Mammary epithelial cell (primary cell): ENCODE measurements at regions of chr2 and their contacts with region 1.

Region 1: GRCh38 chr2:24971536-24972314 is at the start of gene DNAJC27:
- DNase-seq: peak; percentile 98
- H3K4me3 ChIP-seq: peak within 1 kb of the TSS; percentile 69 to 90 (median 83)
- H3K27ac ChIP-seq: peak within 1 kb of the TSS; percentile 98
- H3K4me1 ChIP-seq: peaks cover 4% of the 10 kb centered on the region
- H3K27me3 ChIP-seq: no peaks in the 10 kb centered on the region
- CTCF ChIP-seq: no peak
- total RNA-seq, gene DNAJC27: 4.4 to 5.0 TPM

Region 2: DNA sequence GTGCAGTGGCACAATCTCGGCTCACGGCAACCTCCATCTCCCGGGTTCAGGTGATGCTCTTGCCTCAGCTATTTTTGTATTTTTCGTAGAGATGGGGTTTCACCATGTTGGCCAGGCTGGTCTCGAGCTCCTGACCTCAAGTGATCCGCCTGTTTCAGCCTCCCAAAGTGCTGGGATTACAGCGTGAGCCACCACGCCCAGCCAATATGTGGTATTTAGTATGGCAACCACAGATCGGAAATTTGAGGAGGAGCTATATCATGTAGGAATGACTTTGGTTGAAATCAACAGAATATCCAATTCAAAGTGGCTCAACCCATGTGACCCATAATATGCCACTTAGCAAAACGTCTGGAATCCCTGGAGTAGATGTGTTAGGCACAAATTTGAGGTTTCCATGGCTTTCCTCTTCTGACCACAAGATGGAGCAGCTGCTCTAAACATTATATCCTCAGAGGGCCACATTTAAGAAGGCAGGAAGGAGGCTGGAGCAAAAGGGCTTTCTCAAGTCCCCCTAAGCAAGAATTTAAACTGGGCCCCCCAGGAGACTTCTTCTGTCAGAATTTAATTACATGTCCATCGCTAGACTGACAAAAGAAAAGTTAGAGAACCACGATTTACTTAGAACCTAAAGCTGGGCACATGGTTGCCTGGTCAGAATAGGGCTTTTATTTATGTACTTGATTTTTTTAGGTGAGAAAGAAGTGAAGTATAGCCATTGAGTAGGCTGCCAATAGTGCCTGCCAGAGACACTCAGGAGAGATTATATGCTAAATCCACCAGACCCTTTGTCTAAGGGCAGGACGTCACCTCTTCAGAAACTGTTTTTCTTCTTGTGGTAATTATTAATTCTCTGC is 561.8 kb before region 1 on chr2:
- CTCF ChIA-PET with region 1: no interaction called
- dilution Hi-C with region 1: no loop called
- in situ Hi-C with region 1: no loop called
- intact Hi-C with region 1: loop called (anchors 1 kb)
- DNase-seq: peak; percentile 49
- H3K4me3 ChIP-seq: no peak overlapping the region
- H3K27ac ChIP-seq: no peak overlapping the region
- H3K4me1 ChIP-seq: peaks cover 1% of the 10 kb centered on the region
- H3K27me3 ChIP-seq: no peaks in the 10 kb centered on the region
- CTCF ChIP-seq: peak; percentile 81 to 84

Region 3: GRCh38 chr2:24509425-24509824 is 462.3 kb before region 1 on chr2:
- CTCF ChIA-PET with region 1: no interaction called
- dilution Hi-C with region 1: no loop called
- in situ Hi-C with region 1: no loop called
- intact Hi-C with region 1: no loop called
- DNase-seq: no peak
- H3K4me3 ChIP-seq: no peak overlapping the region
- H3K27ac ChIP-seq: no peak overlapping the region
- H3K4me1 ChIP-seq: no peaks in the 10 kb centered on the region
- H3K27me3 ChIP-seq: no peaks in the 10 kb centered on the region
- CTCF ChIP-seq: no peak

Region 4: DNA sequence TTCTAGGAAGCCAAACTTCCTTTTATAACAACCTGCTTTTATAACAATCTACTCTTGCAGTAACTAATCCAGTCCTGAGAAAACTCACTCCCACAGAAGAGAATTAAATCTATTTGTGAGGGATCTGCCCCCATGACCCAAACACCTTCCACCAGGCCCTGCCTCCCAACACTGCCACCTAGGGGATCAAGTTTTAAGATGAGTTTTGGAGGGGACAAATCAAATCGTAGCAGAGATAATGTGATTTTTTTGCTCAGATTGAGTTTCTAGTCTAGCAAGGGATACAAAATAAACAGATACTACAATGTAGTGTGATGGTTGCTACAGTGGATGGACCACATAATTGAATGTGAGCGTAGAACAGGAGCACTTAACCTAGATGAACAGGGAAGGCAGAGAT is 428.5 kb before region 1 on chr2:
- CTCF ChIA-PET with region 1: no interaction called
- dilution Hi-C with region 1: no loop called
- in situ Hi-C with region 1: no loop called
- intact Hi-C with region 1: no loop called
- DNase-seq: no peak
- H3K4me3 ChIP-seq: no peak overlapping the region
- H3K27ac ChIP-seq: no peak overlapping the region
- H3K4me1 ChIP-seq: no peaks in the 10 kb centered on the region
- H3K27me3 ChIP-seq: no peaks in the 10 kb centered on the region
- CTCF ChIP-seq: peak; percentile 20 to 41

Region 5: GRCh38 chr2:24920098-24920808 is 51.5 kb before region 1 on chr2 and contains the start of gene ADCY3:
- CTCF ChIA-PET with region 1: no interaction called
- dilution Hi-C with region 1: no loop called
- in situ Hi-C with region 1: no loop called
- intact Hi-C with region 1: loop called (anchors 2 kb)
- DNase-seq: peak; percentile 23
- H3K4me3 ChIP-seq: peak within 1 kb of the TSS; percentile 49 to 67 (median 50)
- H3K27ac ChIP-seq: no peak within 1 kb of the TSS
- H3K4me1 ChIP-seq: peaks cover 26% of the 10 kb centered on the region
- H3K27me3 ChIP-seq: no peaks in the 10 kb centered on the region
- CTCF ChIP-seq: no peak
- total RNA-seq, gene ADCY3: 13.3 to 50.5 TPM

Region 6: GRCh38 chr2:24984912-24985311 is 13.2 kb after region 1 on chr2:
- CTCF ChIA-PET with region 1: interaction called, 18 read pairs
- dilution Hi-C with region 1: no loop called
- in situ Hi-C with region 1: no loop called
- intact Hi-C with region 1: no loop called
- DNase-seq: no peak
- H3K4me3 ChIP-seq: no peak overlapping the region
- H3K27ac ChIP-seq: no peak overlapping the region
- H3K4me1 ChIP-seq: no peaks in the 10 kb centered on the region
- H3K27me3 ChIP-seq: peaks cover 5% of the 10 kb centered on the region
- CTCF ChIP-seq: no peak

Region 7: GRCh38 chr2:25201265-25201664 is 229.5 kb after region 1 on chr2:
- CTCF ChIA-PET with region 1: no interaction called
- dilution Hi-C with region 1: no loop called
- in situ Hi-C with region 1: no loop called
- intact Hi-C with region 1: loop called (anchors 1 kb)
- DNase-seq: no peak
- H3K4me3 ChIP-seq: no peak overlapping the region
- H3K27ac ChIP-seq: no peak overlapping the region
- H3K4me1 ChIP-seq: peaks cover 8% of the 10 kb centered on the region
- H3K27me3 ChIP-seq: peaks cover 2% of the 10 kb centered on the region
- CTCF ChIP-seq: peak in 1 of 2 donors; percentile 29

Region 8: GRCh38 chr2:25252281-25253105 is 280.8 kb after region 1 on chr2:
- CTCF ChIA-PET with region 1: no interaction called
- dilution Hi-C with region 1: no loop called
- in situ Hi-C with region 1: no loop called
- intact Hi-C with region 1: no loop called
- DNase-seq: no peak
- H3K4me3 ChIP-seq: no peak overlapping the region
- H3K27ac ChIP-seq: no peak overlapping the region
- H3K4me1 ChIP-seq: peaks cover 14% of the 10 kb centered on the region
- H3K27me3 ChIP-seq: no peaks in the 10 kb centered on the region
- CTCF ChIP-seq: no peak

Region 9: DNA sequence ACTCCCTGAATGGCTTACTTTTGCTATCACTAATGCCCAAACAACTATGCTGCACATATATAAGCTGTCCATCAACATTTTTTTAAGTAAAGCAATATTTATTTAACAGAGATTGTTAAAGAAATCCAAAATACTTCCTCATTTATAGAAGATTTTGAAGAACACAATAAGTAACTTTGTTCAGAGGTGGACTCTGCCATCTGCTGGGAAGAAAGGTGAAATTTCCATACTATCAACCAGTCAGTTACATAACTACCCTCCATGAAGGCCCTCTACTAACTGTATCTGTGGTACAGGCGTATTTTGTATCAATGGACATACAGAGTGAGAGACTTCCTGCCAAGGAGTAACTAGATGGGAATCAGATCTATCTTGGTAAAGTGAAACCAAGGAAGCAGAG is 595.7 kb after region 1 on chr2:
- CTCF ChIA-PET with region 1: no interaction called
- dilution Hi-C with region 1: no loop called
- in situ Hi-C with region 1: no loop called
- intact Hi-C with region 1: loop called (anchors 5 kb)
- DNase-seq: peak; percentile 17
- H3K4me3 ChIP-seq: no peak overlapping the region
- H3K27ac ChIP-seq: no peak overlapping the region
- H3K4me1 ChIP-seq: no peaks in the 10 kb centered on the region
- H3K27me3 ChIP-seq: no peaks in the 10 kb centered on the region
- CTCF ChIP-seq: peak; percentile 19 to 42